PC-3 (cell line): ENCODE measurements at regions of chr2 and their contacts with region 1.

Region 1: GRCh38 chr2:43685357-43685756 is 9.1 kb upstream of the C1GALT1C1L start:
- DNase-seq: no peak
- ATAC-seq: no peak
- H3K4me3 ChIP-seq: no peak overlapping the region
- H3K27ac ChIP-seq: no peak overlapping the region
- H3K4me1 ChIP-seq: no peaks in the 10 kb centered on the region
- H3K27me3 ChIP-seq: no peaks in the 10 kb centered on the region
- CTCF ChIP-seq: no peak

Region 2: DNA sequence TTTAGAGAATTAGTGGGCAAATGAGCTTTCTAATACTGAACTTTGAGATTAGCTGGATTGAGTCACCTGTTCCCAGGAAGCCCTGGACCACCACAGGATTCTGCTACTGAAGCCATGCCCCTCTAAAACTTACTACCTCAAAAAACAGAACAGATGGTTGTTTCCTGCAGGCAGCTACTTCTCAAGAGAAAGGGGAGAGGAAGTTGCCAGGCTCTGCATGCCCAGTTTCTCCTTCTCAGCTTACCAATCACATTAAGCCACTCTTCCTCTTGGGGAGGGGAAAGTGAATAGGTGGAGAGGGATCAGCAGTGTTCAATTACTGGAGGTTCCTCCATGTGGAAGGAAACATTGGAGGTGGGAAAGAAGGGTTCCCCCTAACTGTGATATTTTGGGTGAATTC is 15.8 kb after region 1 on chr2:
- CTCF ChIA-PET with region 1: no interaction called
- POLR2A ChIA-PET with region 1: interaction called, 14 read pairs
- intact Hi-C with region 1: no loop called
- DNase-seq: no peak
- ATAC-seq: no peak
- H3K4me3 ChIP-seq: no peak overlapping the region
- H3K27ac ChIP-seq: no peak overlapping the region
- H3K4me1 ChIP-seq: peaks cover under 1% of the 10 kb centered on the region; the same call in 1 of the 2 replicates
- H3K27me3 ChIP-seq: no peaks in the 10 kb centered on the region
- CTCF ChIP-seq: no peak

Region 3: DNA sequence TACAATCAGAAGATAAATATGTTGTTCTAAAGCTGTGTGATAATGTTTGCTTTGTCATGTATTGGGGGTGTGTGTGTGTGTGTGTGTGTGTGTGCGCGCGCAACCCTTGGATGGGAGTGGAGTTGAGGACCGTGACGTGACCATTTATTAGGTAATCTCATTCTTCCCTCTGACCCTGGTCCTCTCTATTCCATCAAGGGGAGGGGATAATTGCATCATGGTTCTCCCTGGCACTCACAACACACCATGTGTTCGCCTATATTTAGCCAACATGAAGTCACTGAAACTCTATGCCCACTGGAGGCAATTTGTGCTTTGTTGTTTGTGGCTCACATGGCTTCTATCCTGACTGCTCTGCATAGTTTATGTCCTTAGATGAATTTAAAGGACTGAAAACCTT is 390.2 kb after region 1 on chr2:
- CTCF ChIA-PET with region 1: no interaction called
- POLR2A ChIA-PET with region 1: no interaction called
- intact Hi-C with region 1: no loop called
- DNase-seq: no peak
- ATAC-seq: no peak
- H3K4me3 ChIP-seq: no peak overlapping the region
- H3K27ac ChIP-seq: no peak overlapping the region
- H3K4me1 ChIP-seq: no peaks in the 10 kb centered on the region
- H3K27me3 ChIP-seq: no peaks in the 10 kb centered on the region
- CTCF ChIP-seq: no peak